PC-3 (cell line): ENCODE measurements at regions of chr19 and their contacts with region 1.

Region 1: DNA sequence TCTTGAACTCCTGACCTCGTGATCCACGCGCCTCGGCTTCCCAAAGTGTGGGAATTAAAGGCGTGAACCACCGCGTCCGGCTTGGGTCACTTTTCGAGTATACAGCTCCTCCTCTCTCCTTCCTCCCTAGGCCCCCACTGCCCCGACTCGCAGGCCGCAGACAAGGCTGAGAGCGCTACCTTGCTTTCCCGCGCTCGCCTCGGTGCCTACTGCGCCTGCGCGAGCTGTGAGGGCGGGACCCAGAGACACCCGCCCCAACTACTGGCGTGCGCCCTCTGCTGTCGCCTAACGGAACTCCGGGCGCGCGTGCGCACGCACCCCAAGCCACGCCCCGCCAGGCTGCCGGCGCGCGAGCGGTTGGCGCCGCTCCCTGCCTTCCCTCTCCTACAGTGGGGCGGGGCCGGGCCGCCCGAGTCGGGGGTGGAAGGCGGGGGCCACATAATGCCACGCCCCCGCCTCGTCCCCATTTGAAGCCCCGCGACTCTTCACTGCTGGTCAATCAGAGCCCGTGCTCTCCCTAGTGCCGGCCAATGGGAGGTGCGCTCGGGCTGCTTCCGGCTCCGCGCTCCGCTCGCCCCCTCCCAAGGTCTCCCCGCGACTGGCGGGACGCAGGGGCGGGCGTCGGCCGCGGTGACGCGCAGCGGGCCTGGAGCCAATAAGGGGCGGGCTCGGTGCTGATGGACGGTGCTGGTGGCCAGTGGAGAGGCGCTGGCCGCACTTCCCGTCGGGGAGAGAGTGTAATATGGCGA is at the start of gene RAB8A:
- DNase-seq: peak; percentile 99
- ATAC-seq: peak; percentile 98
- H3K4me3 ChIP-seq: peak within 1 kb of the TSS; percentile 96
- H3K27ac ChIP-seq: peak within 1 kb of the TSS; percentile 48
- H3K4me1 ChIP-seq: peaks cover 15% of the 10 kb centered on the region
- H3K27me3 ChIP-seq: no peaks in the 10 kb centered on the region
- CTCF ChIP-seq: peak; percentile 76
- total RNA-seq, gene RAB8A: 65.7 and 94.5 TPM in 2 replicates

Region 2: DNA sequence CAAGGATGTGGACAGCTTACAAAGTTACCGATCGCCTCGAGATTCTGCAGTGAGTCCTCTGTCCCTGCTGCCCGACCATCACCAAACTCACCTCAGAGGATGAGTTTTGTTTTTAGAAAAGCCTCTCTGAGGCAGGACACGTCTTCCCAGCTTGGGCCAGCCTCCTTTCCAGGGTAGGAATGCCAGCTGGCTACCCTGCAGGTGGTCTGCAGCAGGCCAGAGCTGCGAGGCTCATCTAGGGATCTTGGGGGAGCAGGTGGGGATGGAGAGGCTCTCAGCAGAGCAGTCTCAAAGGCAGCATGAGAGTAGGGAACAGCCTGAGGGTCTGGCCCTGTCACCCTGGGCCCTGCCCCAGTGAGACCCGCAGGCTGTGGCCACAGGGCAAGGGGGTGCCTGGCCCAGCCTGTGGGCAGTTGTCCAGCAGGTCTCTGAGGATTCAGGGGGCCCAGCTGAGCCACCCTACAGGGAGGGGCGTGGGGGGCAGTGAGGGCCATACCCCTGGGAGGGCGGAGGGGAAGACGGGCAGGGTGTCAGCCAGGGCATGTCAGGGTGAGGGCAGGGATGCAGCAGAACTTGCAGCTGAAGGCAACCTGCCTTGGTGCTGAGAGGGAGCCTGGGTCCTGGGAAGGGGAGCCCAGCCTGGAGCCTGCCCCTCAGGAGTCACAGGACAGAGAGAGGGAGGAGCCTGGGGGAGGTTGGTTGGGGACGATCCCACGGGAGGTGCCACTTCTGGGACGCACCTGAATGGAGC is 92.4 kb before region 1 on chr19:
- CTCF ChIA-PET with region 1: no interaction called
- POLR2A ChIA-PET with region 1: no interaction called
- intact Hi-C with region 1: no loop called
- DNase-seq: no peak
- ATAC-seq: no peak
- H3K4me3 ChIP-seq: no peak overlapping the region
- H3K27ac ChIP-seq: no peak overlapping the region
- H3K4me1 ChIP-seq: no peaks in the 10 kb centered on the region
- H3K27me3 ChIP-seq: no peaks in the 10 kb centered on the region
- CTCF ChIP-seq: no peak

Region 3: DNA sequence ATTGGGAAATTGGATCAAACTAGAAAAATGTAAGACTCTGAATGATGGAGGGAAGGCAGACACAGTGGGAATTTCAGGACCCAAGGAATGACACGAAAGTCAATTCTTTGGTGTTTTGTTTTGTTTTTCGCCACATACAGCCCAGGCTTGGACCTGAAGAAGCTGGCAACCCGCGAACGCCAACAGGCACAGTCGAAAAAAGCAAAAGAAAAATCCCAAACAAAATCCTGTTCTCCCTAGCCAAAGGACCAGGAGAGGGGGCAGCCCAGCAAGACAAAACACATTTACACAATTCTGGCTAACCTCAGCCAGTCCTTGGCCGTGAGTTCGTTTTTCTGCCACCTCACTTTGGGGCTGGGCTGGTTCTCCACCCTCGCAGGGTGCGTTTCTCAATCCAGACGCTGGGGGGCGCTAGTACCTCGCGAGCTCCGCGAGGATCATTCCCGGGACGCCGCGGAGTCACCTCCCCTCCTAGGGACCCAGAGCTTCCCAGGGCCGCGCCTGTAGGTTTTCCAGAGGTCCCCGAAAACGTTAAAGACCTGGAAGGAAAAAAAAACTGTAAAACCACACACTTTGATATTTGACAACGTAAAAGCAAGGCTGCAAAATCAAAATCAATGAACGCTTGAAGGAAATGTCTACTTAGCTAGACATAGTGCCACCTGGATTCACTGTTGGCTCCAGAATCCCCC is 69.9 kb before region 1 on chr19:
- CTCF ChIA-PET with region 1: interaction called, 6 read pairs
- POLR2A ChIA-PET with region 1: interaction called, 12 read pairs
- intact Hi-C with region 1: loop called (anchors 1 kb)
- DNase-seq: peak; percentile 87
- ATAC-seq: peak; percentile 95
- H3K4me3 ChIP-seq: peak overlapping the region; percentile 36
- H3K27ac ChIP-seq: no peak overlapping the region
- H3K4me1 ChIP-seq: 0 out of 2 replicates have a peak, but pooled peaks cover 5% of the 10 kb centered on the region
- H3K27me3 ChIP-seq: no peaks in the 10 kb centered on the region
- CTCF ChIP-seq: peak; percentile 95

Region 4: DNA sequence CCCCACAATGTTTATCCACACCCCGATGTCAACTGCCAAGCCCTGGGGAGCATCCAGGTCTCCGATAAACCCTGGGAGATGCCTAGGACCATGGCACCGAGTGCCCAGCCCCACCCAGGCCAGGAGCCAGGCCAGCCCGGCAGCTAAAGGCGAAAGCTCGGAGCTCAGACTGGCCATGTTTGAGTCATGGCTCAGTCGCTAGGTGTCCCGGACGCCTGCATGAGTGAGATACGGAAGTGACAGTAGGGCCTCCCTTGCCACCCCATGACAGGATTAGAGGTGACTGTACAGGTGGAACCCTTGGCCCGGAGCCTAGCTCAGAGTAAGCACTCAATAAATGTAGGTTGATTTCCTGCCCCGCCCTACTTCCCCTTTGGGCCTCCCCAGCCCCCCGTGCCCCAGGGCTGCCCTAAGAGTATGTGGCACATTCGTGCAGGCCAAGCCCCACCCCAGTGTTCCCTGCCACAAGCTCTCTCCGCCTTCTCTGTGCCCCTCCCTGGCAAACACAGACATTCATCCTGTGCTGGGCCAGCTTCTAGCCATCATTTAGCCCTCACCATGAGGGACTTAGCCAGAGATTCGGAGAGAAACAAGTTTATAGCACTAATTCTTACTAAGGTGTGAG is 40.9 kb before region 1 on chr19:
- CTCF ChIA-PET with region 1: interaction called, 17 read pairs
- POLR2A ChIA-PET with region 1: no interaction called
- intact Hi-C with region 1: loop called (anchors 1 kb)
- DNase-seq: peak; percentile 98
- ATAC-seq: peak; percentile 77
- H3K4me3 ChIP-seq: peak overlapping the region; percentile 100
- H3K27ac ChIP-seq: peak overlapping the region; percentile 98
- H3K4me1 ChIP-seq: peaks cover 34% of the 10 kb centered on the region
- H3K27me3 ChIP-seq: no peaks in the 10 kb centered on the region
- CTCF ChIP-seq: no peak

Region 5: GRCh38 chr19:16088351-16089009 is 22.9 kb before region 1 on chr19:
- CTCF ChIA-PET with region 1: no interaction called
- POLR2A ChIA-PET with region 1: no interaction called
- intact Hi-C with region 1: loop called (anchors 2 kb)
- DNase-seq: no peak
- ATAC-seq: no peak
- H3K4me3 ChIP-seq: no peak overlapping the region
- H3K27ac ChIP-seq: no peak overlapping the region
- H3K4me1 ChIP-seq: peaks cover 7% of the 10 kb centered on the region
- H3K27me3 ChIP-seq: no peaks in the 10 kb centered on the region
- CTCF ChIP-seq: peak; percentile 42

Region 6: DNA sequence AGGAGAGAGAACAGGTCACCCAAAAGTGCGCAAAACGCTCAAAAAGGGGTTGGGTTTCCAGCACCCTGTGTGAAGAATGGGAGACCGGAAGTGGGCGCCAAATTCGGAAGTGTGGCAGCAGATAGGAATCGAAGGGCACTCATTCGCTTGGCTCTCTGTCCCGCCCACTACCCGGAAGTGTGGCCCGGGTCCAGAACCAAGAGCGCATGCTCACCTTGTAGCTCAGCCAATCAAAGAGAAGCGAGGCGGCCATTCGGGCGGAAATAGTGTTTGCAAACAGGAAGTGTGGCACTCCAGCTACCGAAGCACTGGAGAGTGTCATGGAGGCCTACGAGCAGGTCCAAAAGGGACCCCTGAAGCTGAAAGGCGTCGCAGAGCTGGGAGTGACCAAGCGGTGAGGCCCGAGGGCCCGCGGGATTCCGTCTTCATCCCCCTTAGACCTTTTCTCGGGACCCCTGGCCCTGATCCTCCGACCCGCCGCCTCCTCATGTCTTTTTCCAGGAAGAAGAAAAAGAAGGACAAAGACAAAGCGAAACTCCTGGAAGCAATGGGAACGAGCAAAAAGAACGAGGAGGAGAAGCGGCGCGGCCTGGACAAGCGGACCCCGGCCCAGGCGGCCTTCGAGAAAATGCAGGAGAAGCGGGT is 73.9 kb after region 1 on chr19 and contains the start of gene FAM32A:
- CTCF ChIA-PET with region 1: interaction called, 9 read pairs
- POLR2A ChIA-PET with region 1: no interaction called
- intact Hi-C with region 1: loop called (anchors 1 kb)
- DNase-seq: peak; percentile 99
- ATAC-seq: peak; percentile 86
- H3K4me3 ChIP-seq: peak within 1 kb of the TSS; percentile 89
- H3K27ac ChIP-seq: peak within 1 kb of the TSS; percentile 12; the same call in 1 of the 2 replicates
- H3K4me1 ChIP-seq: peaks cover 17% of the 10 kb centered on the region
- H3K27me3 ChIP-seq: no peaks in the 10 kb centered on the region
- CTCF ChIP-seq: no peak
- total RNA-seq, gene FAM32A: 141 and 165 TPM in 2 replicates